ENCODE measurements at regions of chr11 and their contacts with region 1.

Region 1: GRCh38 chr11:27362749-27363575 is at the start of gene CCDC34:
- ATAC-seq: peak; percentile 83 to 99 (median 98)
- H3K4me3 ChIP-seq: peak within 1 kb of the TSS; percentile 46 to 66 (median 58)
- H3K27ac ChIP-seq: peak within 1 kb of the TSS; percentile 31 to 72
- H3K4me1 ChIP-seq: peaks cover 12 to 15% of the 10 kb centered on the region in 2 donors
- total RNA-seq, gene CCDC34: 9.4 to 40.2 (median 23.9) TPM

Region 2: GRCh38 chr11:27158722-27159679 is 204.0 kb before region 1 on chr11:
- in situ Hi-C with region 1: no loop called
- ATAC-seq: peak; percentile 48 to 90 (median 74)
- H3K4me3 ChIP-seq: no peak overlapping the region
- H3K27ac ChIP-seq: no peak overlapping the region
- H3K4me1 ChIP-seq: no peaks in the 10 kb centered on the region

Region 3: DNA sequence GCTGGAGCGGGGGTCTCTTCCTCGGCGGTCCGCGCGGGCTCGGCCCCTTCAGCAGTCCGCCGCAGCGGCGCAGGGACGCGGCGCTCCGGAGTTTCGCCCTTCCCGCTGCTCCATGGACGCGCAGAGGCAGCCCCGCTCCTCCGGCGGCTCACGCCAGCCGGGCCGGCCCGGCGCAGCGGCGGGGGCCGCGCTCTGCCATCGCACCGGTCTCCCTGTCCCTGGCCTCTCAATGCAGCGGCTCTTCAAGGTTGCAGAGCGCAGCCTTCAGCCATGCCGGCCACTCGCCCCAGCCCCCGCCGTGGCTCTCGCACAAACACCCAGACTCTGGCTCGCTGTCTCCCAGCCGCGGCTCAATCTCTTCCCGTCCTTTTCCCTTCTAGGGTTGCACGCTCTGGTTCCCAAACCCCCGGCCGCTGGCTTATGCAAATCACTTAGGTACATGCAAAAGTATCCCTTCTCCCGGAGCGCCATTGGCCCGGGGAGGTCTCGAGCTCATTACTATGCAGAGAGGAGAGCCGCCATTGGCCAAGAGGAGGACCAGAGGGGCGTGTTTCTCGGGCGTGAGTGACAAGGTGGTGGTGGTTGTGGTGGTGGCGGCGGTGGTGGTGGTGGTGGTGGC is 109.5 kb after region 1 on chr11 and contains the start of gene LGR4:
- in situ Hi-C with region 1: loop called in 1 of 9 experiments (anchors 25 kb)
- ATAC-seq: peak; percentile 85 to 94 (median 92)
- H3K4me3 ChIP-seq: peak within 1 kb of the TSS; percentile 80 to 86 (median 84)
- H3K27ac ChIP-seq: peak within 1 kb of the TSS; percentile 63 to 87
- H3K4me1 ChIP-seq: peaks cover 15 to 19% of the 10 kb centered on the region in 2 donors
- total RNA-seq, gene LGR4: 22.3 to 79.2 (median 36.7) TPM